ENCODE measurements at regions of chr16 and their contacts with region 1.

Region 1: DNA sequence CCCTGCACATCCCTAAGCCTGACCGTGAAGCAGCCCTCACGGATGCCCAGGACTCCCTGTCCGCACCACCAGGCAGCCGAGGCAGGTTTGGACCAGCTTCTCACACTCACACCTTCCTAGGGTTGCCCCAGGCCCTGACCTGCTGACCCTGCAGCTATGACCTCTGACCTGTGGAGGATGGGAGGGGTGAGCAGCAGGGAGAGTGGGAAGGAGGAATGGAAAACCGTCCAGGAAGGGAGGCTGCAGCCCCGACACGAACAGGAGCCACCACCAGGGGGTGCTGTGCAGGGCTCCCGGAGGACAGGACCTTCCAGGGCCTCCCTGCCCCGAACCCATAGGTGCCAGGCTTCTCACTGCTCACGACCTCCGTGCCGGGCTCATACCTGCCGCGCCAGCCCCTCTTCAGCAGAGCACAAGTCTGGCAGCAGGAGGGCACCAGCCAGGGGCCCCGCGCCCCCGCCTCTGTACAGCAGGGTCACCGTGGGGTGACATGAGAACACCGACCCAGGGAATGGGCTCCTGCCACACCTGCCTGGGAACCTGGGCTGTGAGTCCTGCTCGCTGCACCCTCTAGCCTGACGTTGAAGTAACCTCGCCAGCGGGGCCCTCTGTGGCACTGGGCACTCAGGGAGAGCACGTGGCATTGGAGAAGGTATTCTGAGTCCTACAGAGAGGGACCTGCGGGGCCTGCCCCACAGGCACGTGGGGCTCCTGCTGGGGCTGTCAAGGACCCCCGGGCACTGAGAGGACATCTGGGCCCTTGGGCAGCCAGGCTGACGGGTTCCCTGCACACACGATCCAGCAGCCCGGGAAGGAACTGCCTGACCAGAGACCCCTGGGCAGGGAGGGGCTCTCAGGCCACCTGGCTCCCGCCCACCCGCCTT is 37.6 kb downstream of the CTU2 start:
- DNase-seq: peak; percentile 60 to 86 (median 84)
- H3K4me3 ChIP-seq: no peak overlapping the region
- H3K27ac ChIP-seq: no peak overlapping the region
- H3K4me1 ChIP-seq: peaks cover 2% of the 10 kb centered on the region
- H3K27me3 ChIP-seq: no peaks in the 10 kb centered on the region
- CTCF ChIP-seq: peak; percentile 71 to 87 (median 72)
- EP300 ChIP-seq: no peak
- POLR2A ChIP-seq: no peak

Region 2: DNA sequence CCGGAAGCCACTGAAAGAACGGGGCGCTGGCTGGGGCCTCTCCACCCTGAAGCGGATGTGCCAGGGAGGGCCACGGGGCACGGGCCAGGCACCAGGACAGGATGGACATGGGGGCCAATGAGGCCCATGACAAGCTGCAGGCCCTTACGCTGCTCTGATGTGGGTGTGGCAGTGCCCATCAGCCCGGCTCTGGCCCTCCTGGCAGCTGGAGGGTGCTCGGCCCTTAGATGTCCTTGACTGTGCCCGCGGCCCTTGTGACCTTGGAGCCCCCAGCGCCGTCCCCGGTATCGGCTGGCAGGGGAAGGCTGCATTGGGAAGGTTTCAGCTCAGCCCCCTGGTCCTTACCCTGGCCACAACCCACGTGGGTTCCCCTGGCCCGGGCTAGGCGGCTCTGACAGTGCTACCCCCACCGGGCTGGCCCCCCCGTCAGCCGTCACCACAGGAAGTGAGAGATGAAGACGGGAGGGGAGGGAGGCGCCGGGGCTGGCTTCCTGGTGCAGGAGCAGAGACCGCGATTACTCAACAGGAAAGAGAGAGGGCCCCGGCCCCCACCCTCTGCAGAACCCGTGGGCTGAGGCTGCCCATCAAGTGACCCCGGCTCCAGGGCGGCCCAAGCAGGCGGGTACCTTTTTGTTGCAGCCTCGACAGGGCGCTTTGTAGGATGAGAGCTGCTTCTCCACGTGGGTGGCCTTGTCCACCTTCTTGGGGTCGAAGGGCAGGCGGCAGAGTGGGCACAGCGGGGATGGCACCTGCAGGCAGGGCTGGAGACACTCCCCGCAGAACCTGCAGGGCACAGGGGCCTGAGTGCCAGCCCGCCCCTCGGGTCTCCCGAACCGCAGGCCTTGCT is 43.1 kb before region 1 on chr16:
- intact Hi-C with region 1: no loop called
- DNase-seq: peak; percentile 44 to 77 (median 74)
- H3K4me3 ChIP-seq: no peak overlapping the region
- H3K27ac ChIP-seq: no peak overlapping the region
- H3K4me1 ChIP-seq: peaks cover 5% of the 10 kb centered on the region
- H3K27me3 ChIP-seq: no peaks in the 10 kb centered on the region
- CTCF ChIP-seq: no peak
- EP300 ChIP-seq: no peak
- POLR2A ChIP-seq: no peak

Region 3: GRCh38 chr16:88785106-88785924 is 41.4 kb after region 1 on chr16 and contains the start of gene PIEZO1:
- intact Hi-C with region 1: loop called (anchors 2 to 5 kb)
- DNase-seq: peak; percentile 73 to 88 (median 85)
- H3K4me3 ChIP-seq: peak within 1 kb of the TSS; percentile 74
- H3K27ac ChIP-seq: peak within 1 kb of the TSS; percentile 67 to 75
- H3K4me1 ChIP-seq: peaks cover 15% of the 10 kb centered on the region
- H3K27me3 ChIP-seq: no peaks in the 10 kb centered on the region
- CTCF ChIP-seq: peak; percentile 87 to 97 (median 94)
- EP300 ChIP-seq: no peak
- POLR2A ChIP-seq: no peak
- total RNA-seq, gene PIEZO1: 27.8 to 93.5 (median 49.1) TPM

Region 4: GRCh38 chr16:88821168-88821850 is 77.4 kb after region 1 on chr16:
- intact Hi-C with region 1: no loop called
- DNase-seq: no peak
- H3K4me3 ChIP-seq: no peak overlapping the region
- H3K27ac ChIP-seq: no peak overlapping the region
- H3K4me1 ChIP-seq: no peaks in the 10 kb centered on the region
- H3K27me3 ChIP-seq: no peaks in the 10 kb centered on the region
- CTCF ChIP-seq: no peak
- EP300 ChIP-seq: no peak
- POLR2A ChIP-seq: no peak

Region 5: GRCh38 chr16:88866151-88866920 is 122.4 kb after region 1 on chr16 and contains the start of gene PABPN1L:
- intact Hi-C with region 1: loop called in 1 of 4 experiments (anchors 10 kb)
- DNase-seq: no peak
- H3K4me3 ChIP-seq: no peak within 1 kb of the TSS
- H3K27ac ChIP-seq: no peak within 1 kb of the TSS
- H3K4me1 ChIP-seq: peaks cover 1% of the 10 kb centered on the region
- H3K27me3 ChIP-seq: no peaks in the 10 kb centered on the region
- CTCF ChIP-seq: no peak
- EP300 ChIP-seq: no peak
- POLR2A ChIP-seq: no peak
- total RNA-seq, gene PABPN1L: not detected

Region 6: DNA sequence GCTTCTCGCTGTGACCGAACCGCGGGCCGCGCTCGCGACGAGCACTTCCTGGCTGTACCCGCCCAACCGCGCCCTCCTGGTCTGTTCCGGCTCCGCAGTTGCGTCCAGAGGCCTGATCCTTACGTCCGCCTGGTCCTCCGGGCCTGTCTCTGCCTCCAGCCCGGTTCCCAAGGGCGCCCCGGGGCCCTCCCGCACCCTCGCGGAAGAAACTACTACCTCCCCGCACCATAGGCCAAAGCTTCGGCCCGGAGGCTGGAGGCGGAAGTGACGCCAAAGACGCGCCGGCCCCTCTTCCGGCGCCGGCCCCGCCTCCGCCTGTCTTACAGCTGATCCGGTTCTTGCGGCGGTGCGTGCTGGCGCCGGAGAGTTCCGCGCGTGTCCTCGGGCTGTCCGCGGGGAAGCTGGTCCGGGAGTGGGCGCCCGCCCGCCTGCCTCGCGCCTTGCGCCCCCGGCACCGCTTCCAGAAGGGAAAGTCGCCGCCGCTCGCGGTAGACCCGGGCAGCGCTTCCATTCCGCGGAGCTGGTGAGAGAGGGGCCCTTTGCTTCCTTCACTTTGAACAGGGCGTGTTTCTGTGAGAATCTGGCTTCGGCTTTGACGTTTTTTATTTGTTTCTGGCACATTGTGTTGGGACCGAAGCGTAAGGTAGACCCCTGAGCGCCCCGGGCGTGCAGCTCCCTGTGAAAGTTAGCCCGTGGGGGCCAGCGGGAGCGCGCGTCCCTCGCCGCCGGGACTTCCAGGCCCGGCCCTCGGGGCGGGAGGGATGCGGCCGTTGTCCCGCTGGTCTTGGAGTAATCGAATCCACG is 473.7 kb after region 1 on chr16 and contains the start of gene ZNF778:
- intact Hi-C with region 1: loop called (anchors 5 to 10 kb)
- DNase-seq: peak; percentile 77 to 88 (median 82)
- H3K4me3 ChIP-seq: peak within 1 kb of the TSS; percentile 99
- H3K27ac ChIP-seq: peak within 1 kb of the TSS; percentile 77 to 96
- H3K4me1 ChIP-seq: peaks cover 2% of the 10 kb centered on the region
- H3K27me3 ChIP-seq: no peaks in the 10 kb centered on the region
- CTCF ChIP-seq: peak in 1 of 3 donors; percentile 30
- EP300 ChIP-seq: no peak
- POLR2A ChIP-seq: peak; percentile 80
- total RNA-seq, gene ZNF778: 7.8 to 71.9 (median 8.4) TPM

Measured in ovary (tissue), 10 donors.